Endothelial cell of umbilical vein (primary cell): ENCODE measurements at regions of chrX and their contacts with region 1.

Region 1: DNA sequence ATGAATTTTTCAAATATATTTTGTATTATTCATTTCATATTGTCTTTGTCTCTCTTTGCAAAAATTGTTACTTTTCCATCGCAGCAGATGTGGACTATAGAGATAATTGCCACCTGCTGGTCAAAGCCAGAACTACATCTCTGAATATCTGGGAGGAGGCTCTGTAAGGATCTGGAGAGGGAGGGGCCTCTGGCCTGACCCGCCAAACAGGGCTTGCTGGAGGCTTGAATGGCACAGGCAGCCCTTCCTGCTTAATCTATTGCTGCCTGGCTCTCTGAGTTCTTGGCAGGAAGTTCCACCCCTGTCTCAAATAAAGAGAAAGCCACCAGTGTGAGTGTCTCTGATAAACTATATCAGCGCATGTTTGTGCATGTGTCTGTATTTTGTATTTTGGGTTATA is 132.4 kb downstream of the ZMAT1 start:
- DNase-seq: peak; percentile 88
- H3K4me3 ChIP-seq: peak overlapping the region in 1 of 3 experiments; percentile 26
- H3K27ac ChIP-seq: no peak overlapping the region
- H3K4me1 ChIP-seq: peaks cover 3% of the 10 kb centered on the region
- H3K27me3 ChIP-seq: no peaks in the 10 kb centered on the region
- CTCF ChIP-seq: peak; percentile 40 to 52
- POLR2A ChIP-seq: no peak

Region 2: GRCh38 chrX:101462892-101463291 is 336.5 kb before region 1 on chrX:
- CTCF ChIA-PET with region 1: interaction called, 3 read pairs
- POLR2A ChIA-PET with region 1: no interaction called
- dilution Hi-C with region 1: no loop called
- intact Hi-C with region 1: loop called (anchors 5 kb)
- DNase-seq: peak; percentile 47
- H3K4me3 ChIP-seq: no peak overlapping the region
- H3K27ac ChIP-seq: no peak overlapping the region
- H3K4me1 ChIP-seq: no peaks in the 10 kb centered on the region
- H3K27me3 ChIP-seq: no peaks in the 10 kb centered on the region
- CTCF ChIP-seq: peak in 1 of 2 donors; percentile 27
- POLR2A ChIP-seq: no peak

Region 3: DNA sequence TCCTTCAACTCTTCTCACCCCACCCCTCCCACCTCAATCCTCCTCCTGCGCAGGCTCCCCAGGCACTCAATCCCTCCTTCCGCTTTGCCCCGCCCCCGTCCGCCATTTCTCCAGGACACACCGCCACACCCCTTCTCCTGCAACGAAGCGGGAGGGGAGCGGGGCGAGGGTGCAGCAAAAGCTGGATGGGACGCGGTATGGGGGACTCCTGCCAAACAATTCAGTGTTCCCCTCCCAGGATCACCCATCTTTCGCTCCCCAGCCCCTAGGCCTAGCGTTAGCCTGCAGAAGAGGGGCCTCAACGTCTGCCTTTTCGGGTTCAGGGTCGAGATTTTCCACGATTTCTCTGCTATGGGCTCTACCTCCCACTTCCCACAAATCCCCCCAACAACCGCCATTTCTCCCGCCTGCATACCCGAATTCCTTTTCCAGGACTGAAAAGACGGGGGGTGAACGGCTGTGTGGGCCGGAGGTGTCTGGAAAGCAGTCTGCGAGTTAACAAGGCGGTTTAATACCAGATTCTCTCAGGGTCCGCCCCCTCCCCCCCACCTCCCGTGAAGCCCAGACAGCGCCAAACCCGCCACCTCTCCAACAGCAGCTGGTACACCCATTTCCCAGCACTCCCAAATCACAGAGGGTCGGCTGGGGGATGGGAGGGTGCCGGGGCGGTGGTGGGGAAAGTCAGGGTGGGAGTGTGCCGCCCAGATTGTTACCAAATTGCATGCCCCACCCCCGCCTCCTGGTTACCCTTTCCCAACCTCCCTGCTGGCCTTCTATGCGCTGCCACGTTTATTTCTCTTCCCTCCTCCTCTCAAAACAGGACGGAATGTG is 140.5 kb before region 1 on chrX:
- CTCF ChIA-PET with region 1: no interaction called
- POLR2A ChIA-PET with region 1: no interaction called
- dilution Hi-C with region 1: no loop called
- intact Hi-C with region 1: loop called (anchors 1 kb)
- DNase-seq: peak; percentile 51
- H3K4me3 ChIP-seq: peak overlapping the region; percentile 71 to 88 (median 87)
- H3K27ac ChIP-seq: peak overlapping the region; percentile 18
- H3K4me1 ChIP-seq: no peaks in the 10 kb centered on the region
- H3K27me3 ChIP-seq: peaks cover 0 to 2% of the 10 kb centered on the region in 2 experiments
- CTCF ChIP-seq: no peak
- POLR2A ChIP-seq: peak; percentile 38

Region 4: GRCh38 chrX:101931488-101932248 is 132.3 kb after region 1 on chrX and contains the start of gene ZMAT1:
- CTCF ChIA-PET with region 1: no interaction called
- POLR2A ChIA-PET with region 1: interaction called, 3 read pairs
- dilution Hi-C with region 1: no loop called
- intact Hi-C with region 1: loop called (anchors 10 kb)
- DNase-seq: peak; percentile 94
- H3K4me3 ChIP-seq: peak within 1 kb of the TSS; percentile 23 to 58 (median 46)
- H3K27ac ChIP-seq: peak within 1 kb of the TSS; percentile 63
- H3K4me1 ChIP-seq: peaks cover 5% of the 10 kb centered on the region
- H3K27me3 ChIP-seq: no peaks in the 10 kb centered on the region
- CTCF ChIP-seq: no peak
- POLR2A ChIP-seq: peak; percentile 65
- total RNA-seq, gene ZMAT1: 3.7 and 4.3 TPM in 2 replicates